Panc1 (cell line): ENCODE measurements at regions of chr1 and their contacts with region 1.

Region 1: DNA sequence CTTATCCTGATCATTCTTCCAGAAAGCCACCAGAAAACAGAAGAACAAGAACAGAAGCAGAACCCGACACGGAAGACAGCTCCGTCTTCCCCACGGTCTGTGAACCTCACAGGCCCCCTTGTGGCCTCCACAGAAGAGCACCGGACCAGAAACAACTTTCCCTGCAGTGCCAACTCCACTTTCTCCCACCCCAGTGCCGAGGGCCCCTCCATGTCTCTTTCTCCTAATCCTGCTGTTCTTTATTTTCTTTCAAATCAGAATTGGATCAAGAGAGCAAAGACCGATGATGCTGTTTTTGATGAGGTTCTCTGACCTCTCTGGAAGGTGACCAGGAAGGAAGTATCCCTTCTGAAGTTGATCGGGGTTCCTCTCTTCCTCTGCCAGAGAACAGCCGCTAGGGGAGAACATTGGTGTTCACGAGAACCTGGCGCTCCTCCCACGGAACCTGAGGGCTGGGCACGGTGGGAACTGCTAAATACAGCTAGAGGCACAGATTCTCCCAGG is 58.9 kb upstream of the CTTNBP2NL start:
- DNase-seq: peak; percentile 12
- ATAC-seq: peak; percentile 80
- H3K4me3 ChIP-seq: no peak overlapping the region
- H3K27ac ChIP-seq: no peak overlapping the region
- H3K4me1 ChIP-seq: no peaks in the 10 kb centered on the region
- H3K27me3 ChIP-seq: peaks cover 4% of the 10 kb centered on the region; the same call in 1 of the 2 replicates
- CTCF ChIP-seq: peak; percentile 78

Region 2: GRCh38 chr1:112144733-112145426 is 192.2 kb before region 1 on chr1:
- CTCF ChIA-PET with region 1: no interaction called
- POLR2A ChIA-PET with region 1: no interaction called
- in situ Hi-C with region 1: no loop called
- intact Hi-C with region 1: no loop called
- DNase-seq: no peak
- ATAC-seq: no peak
- H3K4me3 ChIP-seq: no peak overlapping the region
- H3K27ac ChIP-seq: no peak overlapping the region
- H3K4me1 ChIP-seq: no peaks in the 10 kb centered on the region
- H3K27me3 ChIP-seq: no peaks in the 10 kb centered on the region
- CTCF ChIP-seq: no peak

Region 3: GRCh38 chr1:112298558-112298957 is 38.5 kb before region 1 on chr1:
- CTCF ChIA-PET with region 1: no interaction called
- POLR2A ChIA-PET with region 1: no interaction called
- in situ Hi-C with region 1: no loop called
- intact Hi-C with region 1: loop called (anchors 2 kb)
- DNase-seq: peak; percentile 5
- ATAC-seq: no peak
- H3K4me3 ChIP-seq: no peak overlapping the region
- H3K27ac ChIP-seq: no peak overlapping the region
- H3K4me1 ChIP-seq: no peaks in the 10 kb centered on the region
- H3K27me3 ChIP-seq: no peaks in the 10 kb centered on the region; the same call in 1 of the 2 replicates
- CTCF ChIP-seq: peak; percentile 62

Region 4: GRCh38 chr1:112371775-112372174 is 34.7 kb after region 1 on chr1:
- CTCF ChIA-PET with region 1: no interaction called
- POLR2A ChIA-PET with region 1: no interaction called
- in situ Hi-C with region 1: no loop called
- intact Hi-C with region 1: no loop called
- DNase-seq: no peak
- ATAC-seq: no peak
- H3K4me3 ChIP-seq: no peak overlapping the region
- H3K27ac ChIP-seq: no peak overlapping the region
- H3K4me1 ChIP-seq: no peaks in the 10 kb centered on the region
- H3K27me3 ChIP-seq: peaks cover 2% of the 10 kb centered on the region; the same call in 1 of the 2 replicates
- CTCF ChIP-seq: no peak